Activated T-helper 1 cell treated with anti-CD3 and anti-CD28 coated beads, Interleukin-12 subunit alpha, Interleukin-12 subunit beta, Interleukin-2, Interleukin-4 antibody, amounts not matched to agents 30 ng/mL and 10 ng/mL and 1 ng/mL, durations not matched to agents 14 hours and 24 hours and 36 hours (primary cell): ENCODE measurements at regions of chr1 and their contacts with region 1.

Region 1: GRCh38 chr1:160376525-160377131 is 9.8 kb downstream of the NHLH1 start:
- DNase-seq: peak; percentile 11
- H3K4me3 Mint-ChIP-seq: no peak overlapping the region
- H3K27ac Mint-ChIP-seq: no peak overlapping the region
- H3K4me1 Mint-ChIP-seq: peaks cover 13% of the 10 kb centered on the region
- H3K27me3 Mint-ChIP-seq: no peaks in the 10 kb centered on the region

Region 2: DNA sequence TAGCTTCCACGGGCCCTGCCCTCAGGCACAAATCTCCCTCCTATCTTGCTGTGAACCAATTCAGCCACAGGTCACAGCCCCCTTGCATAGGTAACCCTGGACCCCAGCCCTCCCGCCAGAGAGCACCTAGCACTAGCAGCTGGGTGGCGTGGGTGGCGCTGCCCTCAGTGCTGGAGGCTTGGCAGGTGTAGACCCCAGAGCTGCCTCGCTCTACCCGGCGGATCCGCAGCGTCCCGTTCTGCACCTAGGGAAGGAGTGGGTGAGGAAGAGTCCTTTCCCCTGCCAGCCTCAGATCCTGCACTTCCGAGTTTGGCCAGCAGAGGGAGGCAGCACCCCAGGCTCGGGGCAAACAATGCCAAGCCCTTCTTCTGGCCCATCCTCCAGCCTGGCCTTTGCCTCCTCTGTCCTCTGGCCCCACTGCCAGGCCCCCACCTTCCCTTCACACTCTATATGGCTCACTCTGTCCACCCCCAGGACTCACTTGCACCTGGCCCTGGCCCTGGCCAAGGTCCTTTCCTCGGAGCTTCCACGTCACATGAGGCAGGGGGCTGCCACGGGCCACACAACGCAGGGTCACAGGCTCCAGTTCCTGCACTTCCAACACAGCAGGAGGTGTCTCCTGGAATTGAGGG is 440.2 kb before region 1 on chr1:
- intact Hi-C with region 1: loop called (anchors 10 kb)
- DNase-seq: peak; percentile 76
- H3K4me3 Mint-ChIP-seq: no peak overlapping the region
- H3K27ac Mint-ChIP-seq: no peak overlapping the region
- H3K4me1 Mint-ChIP-seq: peaks cover 9% of the 10 kb centered on the region
- H3K27me3 Mint-ChIP-seq: peaks cover 16% of the 10 kb centered on the region

Region 3: GRCh38 chr1:160085686-160086455 is 290.8 kb before region 1 on chr1:
- intact Hi-C with region 1: loop called (anchors 1 kb)
- DNase-seq: peak; percentile 56
- H3K4me3 Mint-ChIP-seq: no peak overlapping the region
- H3K27ac Mint-ChIP-seq: no peak overlapping the region
- H3K4me1 Mint-ChIP-seq: peaks cover 17% of the 10 kb centered on the region
- H3K27me3 Mint-ChIP-seq: peaks cover 26% of the 10 kb centered on the region

Region 4: GRCh38 chr1:160193091-160193819 is 183.4 kb before region 1 on chr1:
- intact Hi-C with region 1: loop called (anchors 1 kb)
- DNase-seq: peak; percentile 63
- H3K4me3 Mint-ChIP-seq: no peak overlapping the region
- H3K27ac Mint-ChIP-seq: no peak overlapping the region
- H3K4me1 Mint-ChIP-seq: no peaks in the 10 kb centered on the region
- H3K27me3 Mint-ChIP-seq: no peaks in the 10 kb centered on the region

Region 5: DNA sequence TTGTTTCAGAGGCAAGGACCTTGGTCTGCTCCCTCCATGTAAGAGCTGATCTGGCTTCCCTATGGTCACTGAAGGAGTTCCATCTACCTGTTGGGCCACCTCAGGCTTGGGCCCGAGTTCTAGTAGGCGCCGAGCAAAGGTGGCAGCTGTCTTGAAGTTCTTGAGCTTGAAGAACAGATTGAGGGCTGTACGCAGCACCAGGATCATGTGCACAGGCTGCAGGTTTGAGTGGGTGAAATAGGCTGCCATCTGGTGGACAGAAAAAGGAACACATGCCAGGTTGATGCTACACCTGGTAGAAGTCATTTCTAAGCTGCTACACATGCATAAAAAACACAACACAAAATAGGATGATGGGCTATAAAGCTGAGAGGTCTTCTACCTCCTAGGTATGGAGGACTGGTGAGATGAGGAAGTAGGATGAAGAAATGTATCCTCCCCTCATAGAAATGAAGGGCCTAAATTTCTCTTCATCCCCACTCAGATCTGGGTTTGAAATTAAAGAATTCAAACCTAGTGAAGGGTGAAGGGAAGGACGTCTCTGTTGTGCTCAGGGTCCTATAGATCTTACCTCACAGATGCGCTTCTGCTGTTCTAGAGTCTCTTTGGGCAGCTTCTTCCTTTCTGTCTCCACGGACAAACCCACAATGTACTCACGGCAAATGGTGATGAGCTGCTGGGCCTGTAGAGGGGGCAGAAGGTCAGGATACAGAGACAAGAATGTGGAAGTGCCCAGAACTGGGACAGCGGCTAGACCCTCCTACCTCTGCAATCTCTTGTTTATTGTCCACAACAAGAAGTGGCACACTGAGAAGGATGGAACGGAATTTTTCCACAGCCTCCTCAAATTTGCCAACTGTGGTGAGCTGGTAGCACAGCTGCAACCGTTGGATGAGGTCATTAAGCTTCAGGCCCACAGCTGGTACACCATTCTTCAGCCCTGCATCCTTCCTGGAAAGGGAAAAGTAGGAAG is 85.1 kb before region 1 on chr1:
- intact Hi-C with region 1: loop called (anchors 1 kb)
- DNase-seq: peak; percentile 49
- H3K4me3 Mint-ChIP-seq: no peak overlapping the region
- H3K27ac Mint-ChIP-seq: no peak overlapping the region
- H3K4me1 Mint-ChIP-seq: peaks cover 5% of the 10 kb centered on the region
- H3K27me3 Mint-ChIP-seq: no peaks in the 10 kb centered on the region

Region 6: DNA sequence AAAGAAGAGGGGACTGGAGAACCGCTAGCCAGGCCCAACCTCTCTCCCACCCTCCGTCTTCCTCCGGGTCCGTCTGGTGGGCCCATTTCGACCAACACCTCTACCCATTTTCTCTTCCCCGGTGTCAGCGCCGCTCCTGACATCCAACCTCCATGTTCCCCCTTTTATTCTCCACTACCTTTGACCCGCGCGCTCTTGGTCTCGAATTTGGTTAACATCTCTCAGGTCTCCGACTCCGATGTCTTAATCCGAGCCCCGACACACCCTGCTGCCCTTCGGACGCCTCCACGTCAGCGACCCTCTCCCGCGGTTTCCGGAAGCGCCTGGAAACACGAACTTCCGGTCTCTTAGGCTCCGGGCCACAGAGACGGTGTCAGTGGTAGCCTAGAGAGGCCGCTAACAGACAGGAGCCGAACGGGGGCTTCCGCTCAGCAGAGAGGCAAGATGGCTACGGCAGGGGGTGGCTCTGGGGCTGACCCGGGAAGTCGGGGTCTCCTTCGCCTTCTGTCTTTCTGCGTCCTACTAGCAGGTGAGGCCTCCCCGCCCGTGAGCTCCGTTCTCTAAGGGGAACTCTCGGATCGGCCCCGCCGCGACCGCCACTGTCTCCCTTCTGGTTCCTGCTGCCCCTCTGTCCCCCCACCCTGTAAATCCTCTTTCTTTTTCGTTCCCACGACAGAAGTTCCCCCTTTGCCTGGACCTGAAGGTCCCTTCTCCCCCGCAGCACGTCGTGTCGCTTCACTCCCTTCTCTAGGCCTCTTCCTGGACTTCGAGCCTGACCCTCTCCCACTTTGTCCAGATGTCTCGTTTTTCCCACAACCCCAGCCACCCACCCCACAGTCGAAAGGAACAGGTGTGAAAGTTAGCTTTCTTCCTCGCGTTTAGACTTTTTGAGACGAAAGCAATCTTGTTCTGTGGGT is 33.4 kb before region 1 on chr1 and contains the starts of genes COPA and NCSTN:
- intact Hi-C with region 1: loop called (anchors 5 kb)
- DNase-seq: peak; percentile 88
- H3K4me3 Mint-ChIP-seq: peak within 1 kb of the TSS; percentile 100
- H3K27ac Mint-ChIP-seq: peak within 1 kb of the TSS; percentile 99
- H3K4me1 Mint-ChIP-seq: peaks cover 61% of the 10 kb centered on the region
- H3K27me3 Mint-ChIP-seq: no peaks in the 10 kb centered on the region
- total RNA-seq, gene COPA: 123 and 126 TPM in 2 replicates
- total RNA-seq, gene NCSTN: 74.8 and 81.6 TPM in 2 replicates

Region 7: DNA sequence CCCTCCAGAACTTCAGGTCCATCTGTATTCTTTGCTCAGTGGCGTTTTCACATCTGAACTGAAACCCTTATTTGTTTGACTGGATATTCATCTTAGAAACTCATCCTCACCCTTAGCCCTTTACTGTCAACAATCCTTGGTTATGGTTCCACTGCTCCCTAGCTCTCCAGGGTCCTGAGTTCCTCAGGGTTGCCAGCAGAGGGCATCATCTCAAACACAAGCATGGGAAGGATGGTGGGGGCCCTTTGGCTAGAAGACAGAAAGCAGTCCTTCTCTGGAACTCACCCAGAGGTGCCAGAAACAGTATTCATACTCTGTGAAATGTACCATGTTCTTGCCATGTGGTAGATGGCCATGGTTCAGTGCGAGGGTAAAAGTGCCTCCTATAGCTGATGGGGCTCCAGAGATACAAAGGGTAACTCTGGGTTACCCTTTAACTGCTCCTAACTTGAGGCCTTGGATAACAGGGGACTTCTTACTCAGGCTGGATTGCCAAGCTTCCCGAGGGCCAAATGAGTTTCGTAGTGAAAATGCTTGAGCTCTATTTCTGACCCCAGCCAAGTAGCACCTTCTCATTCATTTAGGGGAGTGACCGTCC is 22.1 kb before region 1 on chr1:
- intact Hi-C with region 1: loop called (anchors 1 kb)
- DNase-seq: no peak
- H3K4me3 Mint-ChIP-seq: no peak overlapping the region
- H3K27ac Mint-ChIP-seq: no peak overlapping the region
- H3K4me1 Mint-ChIP-seq: peaks cover 5% of the 10 kb centered on the region
- H3K27me3 Mint-ChIP-seq: no peaks in the 10 kb centered on the region

Region 8: DNA sequence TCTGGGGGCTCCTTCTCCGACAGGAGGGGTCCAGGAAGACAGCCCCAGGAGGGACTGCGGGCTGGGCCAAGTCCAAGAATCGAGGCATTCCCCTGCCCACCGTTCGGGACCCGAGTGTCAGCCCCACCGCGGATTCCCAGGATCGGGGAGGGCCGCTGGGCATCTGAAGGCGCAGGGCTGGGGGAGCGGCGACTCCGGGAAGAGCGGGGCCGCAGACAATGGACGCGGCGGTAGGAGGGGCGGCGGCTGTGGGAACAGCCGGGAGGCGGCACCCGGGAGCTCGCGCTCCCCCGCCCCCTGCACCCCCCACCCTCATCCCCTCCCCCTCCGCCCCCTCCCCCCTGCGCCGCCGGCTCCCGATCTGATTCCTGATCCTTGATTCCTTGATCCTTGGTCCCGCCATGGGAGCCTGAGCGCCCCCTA is 23.6 kb after region 1 on chr1 and contains the start of gene VANGL2:
- intact Hi-C with region 1: no loop called
- DNase-seq: no peak
- H3K4me3 Mint-ChIP-seq: peak within 1 kb of the TSS; percentile 41
- H3K27ac Mint-ChIP-seq: no peak within 1 kb of the TSS
- H3K4me1 Mint-ChIP-seq: peaks cover 5% of the 10 kb centered on the region
- H3K27me3 Mint-ChIP-seq: peaks cover 49% of the 10 kb centered on the region
- total RNA-seq, gene VANGL2: not detected in 2 replicates